GM10248 (cell line): ENCODE measurements at regions of chr12 and their contacts with region 1.

Region 1: GRCh38 chr12:89999699-90000505 is 291.3 kb upstream of the ATP2B1 start:
- DNase-seq: no peak
- CTCF ChIP-seq: no peak

Region 2: DNA sequence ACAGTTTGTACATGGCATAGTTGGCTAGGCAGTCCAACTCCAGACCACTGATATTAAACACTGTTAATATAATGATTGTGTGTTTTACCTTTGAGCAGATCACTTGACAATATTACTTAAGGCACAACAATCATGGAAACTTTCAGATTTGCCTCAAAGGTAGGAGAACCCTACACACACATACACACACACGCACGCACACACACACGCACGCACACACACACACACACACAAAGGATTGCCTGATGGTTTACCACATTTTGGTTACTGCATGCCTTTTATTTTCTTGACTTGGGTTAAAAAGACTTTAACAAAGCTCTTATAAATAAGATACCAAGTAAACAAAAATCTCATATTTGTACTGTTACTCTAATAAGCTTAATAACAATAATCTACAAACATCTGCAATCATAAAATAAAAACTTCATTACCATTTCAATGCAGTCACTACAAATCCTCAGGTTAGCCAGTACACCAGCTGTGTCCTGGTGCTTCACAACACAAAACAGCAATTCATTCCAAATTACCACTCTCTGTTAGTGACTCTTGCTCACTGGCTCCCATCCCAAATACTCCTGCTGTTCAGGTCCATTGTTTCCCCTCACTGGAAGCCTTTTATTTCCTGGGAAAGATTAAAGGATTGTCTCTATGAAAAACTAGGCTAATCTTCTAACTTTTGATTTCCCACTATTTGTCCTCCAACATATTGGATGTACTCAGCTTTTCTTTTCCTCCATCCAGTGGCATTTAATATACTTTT is 116.1 kb before region 1 on chr12:
- CTCF ChIA-PET with region 1: no interaction called
- POLR2A ChIA-PET with region 1: no interaction called
- DNase-seq: no peak
- CTCF ChIP-seq: no peak

Region 3: DNA sequence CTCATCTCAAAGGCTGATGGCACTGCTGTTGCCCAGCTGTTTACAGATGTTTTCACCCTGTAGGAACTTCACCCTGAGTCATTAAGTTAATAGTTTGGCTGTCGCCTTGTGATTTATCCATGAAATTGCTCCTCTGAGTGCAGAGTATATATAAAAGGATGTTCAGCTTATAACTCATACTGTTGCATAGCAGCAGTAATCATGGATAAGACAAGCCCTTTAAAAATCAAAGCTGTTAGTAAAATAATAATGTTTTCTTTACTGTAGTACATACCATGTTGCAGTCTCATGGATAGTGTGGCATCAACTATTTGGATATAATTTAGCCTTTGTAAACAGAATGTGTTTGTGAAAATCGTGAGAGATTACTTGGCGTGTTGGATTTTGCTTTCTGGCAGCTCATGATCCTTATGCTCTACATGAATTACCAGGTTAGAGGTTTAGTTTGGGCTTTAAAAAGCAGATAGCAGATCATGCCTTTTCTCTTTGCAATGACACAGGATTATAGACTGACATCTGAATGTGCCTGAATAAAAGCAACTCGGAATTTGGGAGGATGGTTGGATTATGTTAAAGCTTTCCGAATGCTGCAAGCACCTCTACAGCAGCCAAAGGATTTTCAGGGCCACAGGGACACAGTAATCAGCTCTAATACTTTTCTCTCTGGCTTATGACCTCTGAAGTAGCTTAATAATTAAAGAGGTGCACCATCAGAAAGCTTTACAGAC is 11.6 kb before region 1 on chr12:
- CTCF ChIA-PET with region 1: interaction called, 24 read pairs
- POLR2A ChIA-PET with region 1: no interaction called
- DNase-seq: no peak
- CTCF ChIP-seq: no peak

Region 4: GRCh38 chr12:90013409-90013808 is 13.5 kb after region 1 on chr12:
- CTCF ChIA-PET with region 1: interaction called, 18 read pairs
- POLR2A ChIA-PET with region 1: no interaction called
- DNase-seq: peak; percentile 6
- CTCF ChIP-seq: peak; percentile 37

Region 5: DNA sequence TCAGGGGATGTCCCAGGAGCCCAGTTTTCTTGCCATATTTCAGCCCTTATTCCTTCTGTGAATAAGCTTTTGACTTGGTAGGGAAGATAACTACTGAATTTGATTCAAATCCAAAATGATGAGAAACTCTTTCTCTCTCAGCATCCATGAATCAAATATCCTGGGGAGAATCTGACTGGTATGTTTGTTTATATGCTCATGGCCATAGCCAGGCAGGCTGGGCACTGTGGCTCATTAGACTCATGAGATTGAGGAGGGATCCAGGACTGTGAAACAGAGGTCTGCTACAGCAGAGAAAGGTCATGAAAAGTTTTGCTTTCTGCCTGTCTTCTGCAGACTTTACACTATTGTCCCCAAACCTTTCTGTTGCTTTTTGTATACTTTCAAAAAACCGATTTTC is 55.2 kb after region 1 on chr12:
- CTCF ChIA-PET with region 1: no interaction called
- POLR2A ChIA-PET with region 1: no interaction called
- DNase-seq: no peak
- CTCF ChIP-seq: no peak